MCF 10A (cell line): ENCODE measurements at regions of chr13 and their contacts with region 1.

Region 1: DNA sequence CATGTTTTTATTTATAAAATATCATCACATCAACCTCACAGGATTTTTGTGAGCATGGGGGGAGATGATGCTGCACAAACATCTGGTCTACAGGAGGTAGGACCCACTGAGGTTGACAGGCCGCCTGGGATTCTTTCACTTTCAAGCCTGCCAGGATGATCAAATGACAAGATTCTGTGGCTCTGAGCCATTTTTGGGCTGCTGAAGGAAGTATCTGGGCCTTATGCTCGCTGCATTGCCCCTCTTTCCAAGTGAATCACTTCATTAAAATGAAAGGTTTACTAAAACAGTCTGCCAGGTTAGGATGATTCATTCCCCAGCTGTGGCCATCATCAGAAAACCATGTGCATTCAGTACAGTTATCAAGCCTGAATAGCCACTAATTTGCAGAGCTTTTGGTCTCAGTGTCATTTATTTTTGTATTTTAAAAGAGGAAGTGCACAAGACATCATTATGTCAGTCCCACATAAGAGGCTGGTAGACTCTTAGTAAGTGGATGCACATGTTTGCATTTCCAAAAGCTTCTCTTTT is 34.4 kb downstream of the STARD13 start:
- DNase-seq: peak; percentile 88
- H3K4me3 Mint-ChIP-seq: no peak overlapping the region
- H3K27ac Mint-ChIP-seq: peak overlapping the region; percentile 76
- H3K4me1 Mint-ChIP-seq: peaks cover 43% of the 10 kb centered on the region
- H3K27me3 Mint-ChIP-seq: no peaks in the 10 kb centered on the region
- CTCF ChIP-seq: no peak

Region 2: GRCh38 chr13:33262062-33262497 is 10.9 kb after region 1 on chr13:
- CTCF ChIA-PET with region 1: interaction called, 5 read pairs
- POLR2A ChIA-PET with region 1: interaction called, 15 read pairs
- intact Hi-C with region 1: no loop called
- DNase-seq: peak; percentile 85
- H3K4me3 Mint-ChIP-seq: no peak overlapping the region
- H3K27ac Mint-ChIP-seq: peak overlapping the region; percentile 64
- H3K4me1 Mint-ChIP-seq: peaks cover 87% of the 10 kb centered on the region
- H3K27me3 Mint-ChIP-seq: no peaks in the 10 kb centered on the region
- CTCF ChIP-seq: no peak